ENCODE measurements at regions of chr11 and their contacts with region 1.

Region 1: GRCh38 chr11:19561011-19561410 is 151.6 kb upstream of the NAV2 start:
- DNase-seq: no peak
- ATAC-seq: no peak

Region 2: DNA sequence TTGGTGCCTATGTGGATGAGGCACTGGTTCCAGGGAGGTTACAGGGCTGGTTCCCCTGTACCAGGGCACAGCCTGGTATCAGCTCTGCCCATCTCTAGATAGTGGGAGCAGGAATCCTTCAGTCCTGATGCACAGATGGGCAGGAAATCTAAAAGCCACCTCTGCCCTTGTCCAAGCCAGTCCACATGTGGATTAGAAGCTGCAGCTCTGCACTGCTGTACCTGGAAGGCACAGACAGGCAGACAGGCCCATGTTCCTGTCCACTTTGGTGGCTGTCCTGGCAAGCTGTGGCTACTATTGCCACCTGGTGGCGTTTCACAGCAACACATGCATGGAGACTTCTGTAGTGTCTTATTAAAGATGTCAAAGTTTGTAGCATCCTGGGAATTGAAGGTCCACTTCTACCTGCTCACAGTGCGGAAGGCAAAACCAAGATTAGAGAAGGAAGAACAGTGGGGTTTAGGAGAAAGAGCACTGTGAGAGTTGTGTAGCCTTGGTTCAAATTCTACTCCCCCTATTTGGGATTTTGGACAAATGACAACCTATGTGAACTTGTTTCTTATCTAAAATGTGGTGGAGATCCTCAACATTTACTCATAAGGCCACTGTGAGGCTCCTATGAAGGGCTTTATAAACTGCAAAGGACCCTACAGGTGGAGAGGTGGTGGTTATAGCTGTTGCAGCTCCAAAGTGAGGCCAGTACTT is 181.7 kb after region 1 on chr11:
- intact Hi-C with region 1: loop called (anchors 2 kb)
- DNase-seq: peak; percentile 88
- ATAC-seq: peak; percentile 85

Region 3: DNA sequence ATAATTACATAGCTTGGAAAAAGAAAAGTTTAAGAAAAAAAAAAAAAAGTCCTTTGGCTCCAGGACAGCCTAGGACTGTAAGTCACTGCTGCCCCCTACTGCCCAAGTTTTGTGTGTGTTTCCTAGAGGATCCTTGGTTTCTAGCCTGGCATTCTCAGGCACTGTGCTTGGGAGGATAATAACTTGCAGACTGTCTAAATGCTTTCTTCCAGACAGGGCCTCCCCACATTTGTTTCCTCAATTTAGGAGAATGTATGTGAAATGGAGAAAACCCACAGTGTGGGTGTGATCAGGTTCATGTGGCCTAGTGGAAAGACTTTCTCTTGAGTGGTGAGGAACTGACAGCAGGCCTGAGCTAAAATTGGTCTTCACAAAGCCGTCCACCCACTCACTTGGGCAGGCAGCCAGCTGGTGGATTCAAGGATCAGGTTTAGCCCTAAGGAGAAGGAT is 342.6 kb after region 1 on chr11:
- intact Hi-C with region 1: loop called (anchors 10 kb)
- DNase-seq: peak; percentile 88
- ATAC-seq: peak; percentile 83

Measured in sciatic nerve (tissue), 2 donors.